T-cell (primary cell): ENCODE measurements at regions of chr14 and their contacts with region 1.

Region 1: DNA sequence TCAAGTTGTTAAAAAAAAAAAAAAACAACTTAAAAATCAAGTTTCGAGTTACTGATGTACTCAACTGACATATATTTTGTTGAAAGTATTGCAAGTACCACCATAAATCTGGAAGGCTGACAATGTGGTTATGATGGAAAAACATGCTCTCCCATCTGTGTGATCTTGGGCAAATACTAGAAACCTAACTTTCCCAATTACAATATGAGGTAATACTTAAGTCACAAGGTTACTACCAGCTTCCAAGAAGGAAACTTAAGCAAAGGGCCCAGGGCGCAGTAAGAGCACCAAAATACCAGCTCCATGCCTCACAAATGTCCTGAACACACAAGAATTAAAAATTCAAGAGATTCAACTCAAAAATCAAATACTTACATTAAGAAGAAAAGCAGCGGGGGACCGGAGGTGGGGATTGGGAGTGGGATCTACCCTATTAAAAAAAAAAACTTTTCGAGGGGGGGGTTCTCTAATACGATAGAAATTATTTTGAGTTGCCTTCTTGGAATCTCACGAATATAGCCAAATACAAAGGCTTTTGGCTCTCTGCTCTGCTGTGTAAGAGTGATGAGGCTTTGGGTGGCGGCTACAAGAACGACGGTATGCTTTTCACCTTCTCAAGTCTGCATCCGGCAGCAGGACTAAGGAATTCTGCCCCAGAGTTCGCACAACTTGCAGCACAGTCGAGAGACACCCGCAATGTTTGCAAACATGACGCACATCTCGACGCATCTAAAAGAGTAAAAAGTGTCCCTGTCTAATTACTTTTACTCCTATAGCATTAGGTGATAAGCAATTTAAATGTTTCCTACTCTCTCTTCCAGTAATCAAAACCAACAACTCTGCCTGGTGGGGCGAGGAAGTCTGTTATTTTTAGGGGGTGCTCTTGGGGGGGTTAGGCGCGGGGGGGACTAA is 1.1 kb downstream of the SAV1 start:
- DNase-seq: peak in 34 of 35 experiments; percentile 20 to 76 (median 50)
- ATAC-seq: peak; percentile 26 to 85 (median 36)
- H3K4me3 ChIP-seq: peak overlapping the region; percentile 64 to 88
- H3K4me3 Mint-ChIP-seq: no peak overlapping the region
- H3K27ac ChIP-seq: no peak overlapping the region
- H3K27ac Mint-ChIP-seq: peak overlapping the region; percentile 58 to 68
- H3K4me1 ChIP-seq: peaks cover 3 to 8% of the 10 kb centered on the region in 2 experiments
- H3K4me1 Mint-ChIP-seq: peaks cover 19 to 28% (median 26%) of the 10 kb centered on the region in 3 donors
- H3K27me3 ChIP-seq: no peaks in the 10 kb centered on the region
- H3K27me3 Mint-ChIP-seq: no peaks in the 10 kb centered on the region

Region 2: DNA sequence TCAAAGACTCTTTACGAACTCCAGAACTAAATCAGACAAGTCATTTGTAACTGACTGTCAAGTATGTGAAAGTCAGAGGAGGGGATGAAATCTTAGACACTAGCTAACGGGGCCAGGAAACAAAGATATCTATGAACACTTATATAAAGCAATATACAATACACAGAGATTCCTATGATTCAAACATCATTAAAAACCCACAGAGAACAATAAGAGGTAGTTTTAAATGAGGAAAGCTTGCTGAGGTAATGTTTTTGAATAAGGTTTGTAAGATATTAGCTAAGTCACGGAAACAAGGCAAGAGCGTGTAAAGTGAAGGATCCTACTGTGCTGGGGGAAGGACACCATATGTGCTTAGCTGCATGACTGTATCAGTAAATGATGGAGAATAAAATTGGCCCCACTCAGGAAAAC is 35.6 kb before region 1 on chr14:
- CTCF ChIA-PET with region 1: no interaction called
- POLR2A ChIA-PET with region 1: interaction called in 1 of 2 experiments, 11 read pairs
- DNase-seq: no peak
- ATAC-seq: no peak
- H3K4me3 ChIP-seq: no peak overlapping the region
- H3K4me3 Mint-ChIP-seq: no peak overlapping the region
- H3K27ac ChIP-seq: no peak overlapping the region
- H3K27ac Mint-ChIP-seq: no peak overlapping the region
- H3K4me1 ChIP-seq: no peaks in the 10 kb centered on the region
- H3K4me1 Mint-ChIP-seq: no peaks in the 10 kb centered on the region
- H3K27me3 ChIP-seq: no peaks in the 10 kb centered on the region
- H3K27me3 Mint-ChIP-seq: no peaks in the 10 kb centered on the region